Colonic mucosa (tissue), 4 donors: ENCODE measurements at regions of chr7 and their contacts with region 1.

Region 1: DNA sequence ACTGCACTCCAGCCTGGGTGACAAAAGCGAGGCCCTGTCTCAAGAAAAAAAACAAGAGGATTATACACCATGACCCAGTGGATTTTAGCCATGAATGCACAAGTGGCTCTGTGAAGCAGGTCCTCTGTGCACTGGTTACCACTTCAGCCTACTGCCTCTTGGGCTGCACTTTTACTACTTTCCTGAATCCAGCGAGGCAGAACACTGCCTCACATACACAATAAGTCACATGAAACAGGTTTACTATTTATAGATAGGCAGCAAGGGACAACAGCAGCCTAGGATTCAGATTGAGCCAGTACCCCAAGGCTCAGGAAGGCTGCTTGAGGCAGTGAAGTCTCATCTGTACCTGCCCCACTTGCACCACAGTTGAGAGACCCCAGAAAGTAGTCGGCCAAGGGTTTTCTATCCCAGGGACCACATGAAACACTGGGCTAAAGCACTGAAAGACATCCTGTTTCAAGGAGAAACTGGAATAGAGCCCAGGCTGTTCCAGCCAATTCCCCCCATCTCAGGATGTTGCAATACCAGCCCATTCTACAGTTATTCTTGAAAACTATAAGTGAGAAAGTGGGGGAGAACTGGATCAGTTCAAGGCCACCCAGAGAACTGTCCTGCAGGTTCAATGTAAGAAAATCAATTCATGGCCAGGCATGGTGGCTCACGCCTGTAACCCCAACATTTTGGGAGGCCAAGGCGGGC is 10.3 kb upstream of the OGDH start:
- DNase-seq: no peak
- H3K4me3 ChIP-seq: no peak overlapping the region
- H3K27ac ChIP-seq: no peak overlapping the region
- H3K4me1 ChIP-seq: no peaks in the 10 kb centered on the region
- H3K27me3 ChIP-seq: no peaks in the 10 kb centered on the region
- CTCF ChIP-seq: no peak

Region 2: GRCh38 chr7:44769776-44770662 is 173.9 kb after region 1 on chr7:
- intact Hi-C with region 1: loop called (anchors 10 kb)
- DNase-seq: no peak
- H3K4me3 ChIP-seq: no peak overlapping the region
- H3K27ac ChIP-seq: peak overlapping the region; percentile 33
- H3K4me1 ChIP-seq: peaks cover 25% of the 10 kb centered on the region
- H3K27me3 ChIP-seq: no peaks in the 10 kb centered on the region
- CTCF ChIP-seq: no peak